ENCODE measurements at regions of chr16 and their contacts with region 1.

Region 1: DNA sequence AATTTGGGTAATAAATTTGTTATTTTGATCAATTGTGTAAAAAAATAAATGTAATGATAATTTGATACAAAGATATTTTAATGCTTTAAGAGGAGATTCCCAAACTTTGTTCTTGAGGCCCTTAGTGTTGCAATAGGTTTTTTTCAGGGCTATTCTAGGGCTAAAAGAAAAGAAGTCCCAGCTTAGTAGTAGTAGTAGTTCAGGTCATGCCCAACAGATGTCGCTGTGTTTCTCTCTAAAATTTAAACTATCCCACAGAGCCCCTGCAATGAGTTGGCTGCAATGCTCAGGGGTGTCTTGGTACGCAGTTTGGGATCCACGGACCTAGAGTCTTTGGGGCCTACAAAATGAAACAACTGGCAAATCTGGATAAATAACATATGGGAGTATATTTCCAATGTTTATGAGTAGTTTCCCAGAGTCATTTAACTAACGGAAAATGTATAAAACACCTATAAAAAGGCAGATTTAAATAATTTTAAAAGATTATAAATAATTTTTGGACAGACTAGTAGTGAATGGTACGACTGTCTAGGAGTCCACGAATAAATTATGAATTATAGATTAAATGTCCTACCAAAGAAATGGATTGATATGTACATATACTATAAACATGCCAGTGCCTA is 228.4 kb upstream of the PMFBP1 start:
- DNase-seq: peak in 1 of 2 experiments; percentile 74
- H3K4me3 ChIP-seq: no peak overlapping the region
- H3K27ac ChIP-seq: no peak overlapping the region
- H3K4me1 ChIP-seq: peaks cover 0 to 2% (median 0%) of the 10 kb centered on the region in 4 experiments; a peak in 1 of 7 replicates
- H3K27me3 ChIP-seq: no peaks in the 10 kb centered on the region
- CTCF ChIP-seq: peak in 2 of 3 experiments; percentile 63 to 67; a peak in 3 of 4 replicates
- EP300 ChIP-seq: no peak
- POLR2A ChIP-seq: no peak
- RAD21 ChIP-seq: peak; percentile 63 to 77

Region 2: DNA sequence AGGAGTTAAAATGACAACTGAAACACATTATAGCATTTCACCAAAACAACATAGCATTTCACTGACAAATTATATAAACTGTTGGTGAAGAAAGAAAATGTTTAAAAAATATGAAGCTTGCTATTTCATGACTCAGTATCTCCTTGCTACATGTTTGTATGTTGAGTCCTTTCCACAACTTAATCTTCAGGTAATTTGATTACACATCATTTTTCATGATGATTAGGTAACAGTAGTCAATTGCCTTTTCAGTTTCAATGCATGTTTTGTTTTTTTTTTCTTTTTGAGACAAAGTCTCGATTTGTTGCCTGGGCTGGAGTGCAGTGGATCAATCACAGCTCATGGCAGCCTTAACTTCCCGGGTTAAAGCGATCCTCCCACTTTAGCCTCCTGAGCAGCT is 50.7 kb before region 1 on chr16:
- CTCF ChIA-PET with region 1: no interaction called
- POLR2A ChIA-PET with region 1: no interaction called
- DNase-seq: no peak
- H3K4me3 ChIP-seq: no peak overlapping the region
- H3K27ac ChIP-seq: no peak overlapping the region
- H3K4me1 ChIP-seq: no peaks in the 10 kb centered on the region; a peak in 1 of 7 replicates
- H3K27me3 ChIP-seq: no peaks in the 10 kb centered on the region
- CTCF ChIP-seq: no peak
- EP300 ChIP-seq: no peak
- POLR2A ChIP-seq: no peak
- RAD21 ChIP-seq: no peak

Region 3: DNA sequence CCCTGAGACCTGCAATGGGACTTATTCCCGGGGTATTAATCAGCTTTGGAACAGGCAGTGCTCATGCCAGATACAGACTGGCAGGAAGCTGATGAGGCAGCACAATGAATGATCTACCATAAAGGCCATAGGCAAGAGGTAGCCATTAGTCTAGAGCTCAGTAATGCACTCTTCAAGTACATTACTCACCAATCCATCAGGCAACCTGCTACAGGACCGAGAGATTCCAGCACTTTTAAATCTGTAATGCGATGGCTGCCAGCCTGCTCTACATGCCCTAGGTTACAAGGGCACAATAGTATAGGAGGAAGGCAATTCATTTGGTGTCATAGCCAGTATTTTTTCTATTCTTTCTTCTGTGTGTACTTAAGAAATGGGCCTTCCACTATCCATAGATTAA is 10.6 kb before region 1 on chr16:
- CTCF ChIA-PET with region 1: interaction called, 13 read pairs
- POLR2A ChIA-PET with region 1: interaction called, 8 read pairs
- DNase-seq: no peak
- H3K4me3 ChIP-seq: no peak overlapping the region
- H3K27ac ChIP-seq: no peak overlapping the region
- H3K4me1 ChIP-seq: no peaks in the 10 kb centered on the region
- H3K27me3 ChIP-seq: no peaks in the 10 kb centered on the region
- CTCF ChIP-seq: no peak
- EP300 ChIP-seq: no peak
- POLR2A ChIP-seq: no peak
- RAD21 ChIP-seq: no peak

Region 4: GRCh38 chr16:72422308-72422897 is 22.0 kb after region 1 on chr16:
- CTCF ChIA-PET with region 1: interaction called, 10 read pairs
- POLR2A ChIA-PET with region 1: no interaction called
- DNase-seq: no peak
- H3K4me3 ChIP-seq: no peak overlapping the region
- H3K27ac ChIP-seq: no peak overlapping the region
- H3K4me1 ChIP-seq: no peaks in the 10 kb centered on the region
- H3K27me3 ChIP-seq: no peaks in the 10 kb centered on the region
- CTCF ChIP-seq: no peak
- EP300 ChIP-seq: no peak
- POLR2A ChIP-seq: no peak
- RAD21 ChIP-seq: no peak

Measured in H1 (cell line).